ENCODE measurements at regions of chr1 and their contacts with region 1.

Region 1: DNA sequence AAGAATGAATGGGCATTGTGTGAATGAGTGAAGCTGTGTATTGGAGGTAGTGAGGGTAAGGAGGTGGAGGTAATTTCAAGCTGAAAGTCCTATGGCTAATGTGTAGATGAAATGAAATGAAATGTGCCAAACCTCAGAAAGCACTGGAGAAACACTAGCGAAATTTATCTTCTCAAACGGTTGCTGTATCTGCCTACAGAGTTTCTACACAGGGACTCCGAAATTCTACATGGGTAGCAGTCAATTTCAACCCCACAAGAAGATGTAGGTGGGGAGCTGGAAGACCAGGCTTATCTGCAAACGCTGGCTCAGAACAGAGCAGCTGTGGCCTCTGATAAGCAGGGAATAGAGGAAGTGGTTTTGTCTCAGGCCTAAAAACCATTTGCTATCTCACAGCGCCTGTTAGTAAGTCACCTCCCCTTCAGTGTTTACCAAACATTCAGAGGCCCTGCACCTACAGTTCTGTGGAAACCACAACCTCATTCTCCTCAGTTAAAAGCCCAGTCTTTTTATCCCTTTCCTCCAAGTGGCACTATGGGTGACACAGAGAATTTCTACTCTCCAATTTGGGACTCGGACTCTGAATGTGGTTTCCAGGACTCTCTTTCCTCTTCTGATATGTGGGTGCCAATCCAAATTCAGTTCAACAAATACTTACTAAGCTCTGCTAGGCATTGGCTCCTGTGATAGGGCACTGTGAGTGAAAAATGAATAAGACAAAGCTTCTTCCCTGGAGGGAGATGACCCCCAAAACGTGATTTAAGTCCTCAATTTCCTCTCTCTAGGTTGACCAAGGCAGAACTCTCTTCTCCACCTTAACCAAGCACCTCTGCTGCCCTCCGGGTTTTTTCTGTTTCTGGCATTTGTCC is 17.2 kb upstream of the SLAMF6 start:
- DNase-seq: peak; percentile 95
- ATAC-seq: peak; percentile 95
- H3K4me3 ChIP-seq: peak overlapping the region; percentile 38; the same call in 1 of the 2 replicates
- H3K27ac ChIP-seq: peak overlapping the region; percentile 92
- H3K4me1 ChIP-seq: peaks cover 23% of the 10 kb centered on the region
- H3K27me3 ChIP-seq: no peaks in the 10 kb centered on the region
- CTCF ChIP-seq: no peak
- EP300 ChIP-seq: peak; percentile 53 to 73; a peak in 3 of 4 replicates
- POLR2A ChIP-seq: peak; percentile 66
- RAD21 ChIP-seq: 0 out of 2 replicates have a peak, but pooled peaks have one; percentile 11

Region 2: DNA sequence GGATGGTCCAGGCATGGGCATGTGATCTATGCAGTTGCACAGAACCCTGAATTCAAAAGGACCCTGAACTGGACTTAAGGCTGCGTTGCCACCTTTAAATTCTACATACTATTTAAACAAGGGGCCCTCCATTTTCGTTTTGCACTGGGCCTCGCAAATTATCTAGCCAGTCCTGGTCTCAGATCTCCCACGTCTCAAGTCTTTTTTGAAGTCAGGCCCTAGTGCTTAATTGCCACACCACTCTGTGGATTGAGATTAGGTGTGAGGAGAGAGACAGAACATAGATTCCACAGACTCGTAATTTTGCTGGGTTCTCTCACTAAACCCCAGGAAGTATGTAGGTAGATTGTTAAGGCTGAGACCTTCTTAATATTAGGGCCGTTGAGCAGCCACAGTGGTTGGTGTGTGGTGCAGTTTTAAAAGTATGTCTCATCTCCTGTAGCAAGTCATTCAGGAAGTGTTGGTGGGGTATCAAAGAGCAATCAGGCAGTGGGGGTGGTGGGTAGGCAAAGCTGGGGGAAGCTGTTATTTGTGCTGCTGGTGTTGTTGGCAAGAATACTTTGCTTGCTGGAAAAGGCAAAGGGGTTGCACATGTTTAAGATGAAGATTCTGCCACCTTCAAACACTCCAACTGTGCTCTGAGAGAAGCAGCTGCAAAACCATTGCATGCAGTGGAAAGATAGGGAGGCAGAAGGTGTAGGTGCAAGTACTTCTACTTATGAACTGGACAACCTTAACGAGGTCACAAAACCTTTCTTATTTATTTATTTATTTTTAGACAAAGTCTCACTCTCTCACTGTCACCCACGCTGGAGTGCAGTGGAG is 27.8 kb after region 1 on chr1:
- CTCF ChIA-PET with region 1: interaction called, 3 read pairs
- POLR2A ChIA-PET with region 1: no interaction called
- RAD21 ChIA-PET with region 1: interaction called, 292 read pairs
- SMC1A ChIA-PET with region 1: interaction called, 735 read pairs
- in situ Hi-C with region 1: no loop called
- intact Hi-C with region 1: no loop called
- DNase-seq: no peak
- ATAC-seq: peak; percentile 86
- H3K4me3 ChIP-seq: peak overlapping the region; percentile 28; the same call in 1 of the 2 replicates
- H3K27ac ChIP-seq: peak overlapping the region; percentile 68
- H3K4me1 ChIP-seq: peaks cover 22% of the 10 kb centered on the region
- H3K27me3 ChIP-seq: no peaks in the 10 kb centered on the region
- CTCF ChIP-seq: no peak
- EP300 ChIP-seq: no peak
- POLR2A ChIP-seq: peak; percentile 38; the same call in 1 of the 2 replicates
- RAD21 ChIP-seq: no peak

Region 3: DNA sequence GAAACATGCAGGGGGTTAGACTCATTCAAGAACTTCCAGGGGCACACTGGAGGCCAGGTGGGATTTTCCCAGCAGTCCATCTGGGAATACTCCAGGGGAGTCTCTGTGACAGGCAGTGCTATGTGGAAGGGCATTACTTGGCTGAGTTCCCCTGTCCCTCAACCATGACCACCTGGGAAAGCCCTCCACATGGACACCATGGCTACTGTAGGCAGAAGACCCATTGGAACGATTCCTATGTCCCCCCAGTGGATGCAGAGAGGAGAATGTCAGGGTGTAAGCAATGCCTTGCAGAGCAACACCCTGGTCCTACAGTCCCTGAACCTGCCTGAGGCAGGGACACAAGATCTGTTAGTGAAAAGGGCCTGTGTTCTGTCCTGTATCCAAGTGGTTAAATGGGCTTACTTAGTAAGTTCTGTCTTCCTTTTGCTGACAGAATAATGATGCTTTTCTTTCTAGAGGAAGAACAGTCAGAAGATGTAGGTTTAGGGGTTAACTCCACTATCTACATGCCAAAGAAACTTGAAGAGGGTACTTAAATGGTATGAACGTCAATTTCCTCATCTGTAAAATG is 93.2 kb after region 1 on chr1:
- CTCF ChIA-PET with region 1: no interaction called
- POLR2A ChIA-PET with region 1: no interaction called
- RAD21 ChIA-PET with region 1: no interaction called
- SMC1A ChIA-PET with region 1: no interaction called
- in situ Hi-C with region 1: no loop called
- intact Hi-C with region 1: no loop called
- DNase-seq: no peak
- ATAC-seq: peak; percentile 1; the same call in 1 of the 3 replicates
- H3K4me3 ChIP-seq: no peak overlapping the region
- H3K27ac ChIP-seq: peak overlapping the region; percentile 15
- H3K4me1 ChIP-seq: peaks cover 53% of the 10 kb centered on the region
- H3K27me3 ChIP-seq: no peaks in the 10 kb centered on the region
- CTCF ChIP-seq: no peak
- EP300 ChIP-seq: no peak
- POLR2A ChIP-seq: no peak; the same call in 1 of the 2 replicates
- RAD21 ChIP-seq: no peak

Measured in GM12878 (cell line).